ENCODE measurements at regions of chr7 and their contacts with region 1.

Region 1: DNA sequence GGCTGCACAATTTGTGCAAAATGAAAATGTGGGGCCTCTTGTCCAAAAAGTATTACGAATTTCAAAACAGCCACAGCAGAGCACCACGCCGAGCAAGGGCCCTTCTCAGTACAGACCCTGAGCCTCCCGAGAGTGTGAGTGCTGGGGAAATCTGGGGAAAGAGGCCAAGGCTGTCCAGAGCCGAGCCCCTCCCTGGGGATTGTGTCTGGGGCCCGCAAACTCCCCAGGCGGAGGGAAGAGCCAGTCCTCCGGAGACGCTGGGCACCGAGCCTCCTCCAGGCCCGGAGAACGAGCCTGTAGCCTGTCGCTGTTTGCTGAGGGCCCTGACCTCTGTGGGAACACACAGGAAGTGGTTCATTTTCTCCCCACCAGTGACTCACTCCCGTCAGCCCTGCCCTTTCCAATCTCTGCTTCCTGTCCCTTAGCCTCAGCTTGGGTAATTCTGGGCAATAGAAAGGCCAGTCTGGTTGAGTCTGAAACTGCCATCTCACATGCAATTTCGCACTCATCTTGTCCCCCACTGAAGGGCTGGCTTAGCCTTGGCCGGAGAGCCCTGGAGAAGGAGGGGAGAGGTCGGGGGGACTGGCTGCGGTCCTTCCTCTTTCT is 19.5 kb upstream of the GNA12 start:
- DNase-seq: peak; percentile 41 to 78 (median 59)
- ATAC-seq: peak; percentile 96
- H3K4me3 ChIP-seq: no peak overlapping the region
- H3K27ac ChIP-seq: no peak overlapping the region
- H3K4me1 ChIP-seq: peaks cover 0 to 15% of the 10 kb centered on the region in 2 experiments; a peak in 3 of 5 replicates
- H3K27me3 ChIP-seq: peaks cover 0 to 5% of the 10 kb centered on the region in 2 experiments; a peak in 1 of 5 replicates
- CTCF ChIP-seq: no peak
- EP300 ChIP-seq: peak; percentile 49; the same call in 1 of the 2 replicates
- POLR2A ChIP-seq: peak; percentile 62
- RAD21 ChIP-seq: 0 out of 4 replicates have a peak, but pooled peaks of 1 of the 2 experiments have one; percentile 17

Region 2: GRCh38 chr7:2621061-2621828 is 242.3 kb before region 1 on chr7:
- CTCF ChIA-PET with region 1: no interaction called
- POLR2A ChIA-PET with region 1: no interaction called
- in situ Hi-C with region 1: no loop called
- intact Hi-C with region 1: no loop called
- DNase-seq: peak in 3 of 4 experiments; percentile 26 to 42 (median 40)
- ATAC-seq: peak; percentile 33
- H3K4me3 ChIP-seq: no peak overlapping the region
- H3K27ac ChIP-seq: no peak overlapping the region
- H3K4me1 ChIP-seq: peaks cover 27 to 69% of the 10 kb centered on the region in 2 experiments; a peak in 4 of 5 replicates
- H3K27me3 ChIP-seq: peaks cover 0 to 8% of the 10 kb centered on the region in 2 experiments; a peak in 3 of 5 replicates
- CTCF ChIP-seq: no peak
- EP300 ChIP-seq: no peak
- POLR2A ChIP-seq: no peak
- RAD21 ChIP-seq: no peak

Region 3: GRCh38 chr7:3065724-3066143 is 202.2 kb after region 1 on chr7:
- CTCF ChIA-PET with region 1: no interaction called
- POLR2A ChIA-PET with region 1: interaction called, 3 read pairs
- in situ Hi-C with region 1: no loop called
- intact Hi-C with region 1: loop called (anchors 10 kb)
- DNase-seq: peak; percentile 70 to 86 (median 82)
- ATAC-seq: peak; percentile 99
- H3K4me3 ChIP-seq: no peak overlapping the region
- H3K27ac ChIP-seq: no peak overlapping the region
- H3K4me1 ChIP-seq: no peaks in the 10 kb centered on the region
- H3K27me3 ChIP-seq: peaks cover 0 to 31% of the 10 kb centered on the region in 2 experiments; a peak in 2 of 5 replicates
- CTCF ChIP-seq: peak; percentile 72 to 79 (median 76)
- EP300 ChIP-seq: 0 out of 2 replicates have a peak, but pooled peaks have one; percentile 11
- POLR2A ChIP-seq: no peak
- RAD21 ChIP-seq: peak in 1 of 2 experiments; percentile 56; a peak in 3 of 4 replicates

Region 4: GRCh38 chr7:3143869-3144775 is 280.6 kb after region 1 on chr7:
- CTCF ChIA-PET with region 1: no interaction called
- POLR2A ChIA-PET with region 1: no interaction called
- in situ Hi-C with region 1: no loop called
- intact Hi-C with region 1: no loop called
- DNase-seq: no peak
- ATAC-seq: no peak
- H3K4me3 ChIP-seq: no peak overlapping the region
- H3K27ac ChIP-seq: no peak overlapping the region
- H3K4me1 ChIP-seq: peaks cover 6 to 11% of the 10 kb centered on the region in 2 experiments; a peak in 4 of 5 replicates
- H3K27me3 ChIP-seq: peaks cover 1 to 31% of the 10 kb centered on the region in 2 experiments; a peak in 3 of 5 replicates
- CTCF ChIP-seq: no peak
- EP300 ChIP-seq: no peak
- POLR2A ChIP-seq: no peak
- RAD21 ChIP-seq: no peak

Region 5: DNA sequence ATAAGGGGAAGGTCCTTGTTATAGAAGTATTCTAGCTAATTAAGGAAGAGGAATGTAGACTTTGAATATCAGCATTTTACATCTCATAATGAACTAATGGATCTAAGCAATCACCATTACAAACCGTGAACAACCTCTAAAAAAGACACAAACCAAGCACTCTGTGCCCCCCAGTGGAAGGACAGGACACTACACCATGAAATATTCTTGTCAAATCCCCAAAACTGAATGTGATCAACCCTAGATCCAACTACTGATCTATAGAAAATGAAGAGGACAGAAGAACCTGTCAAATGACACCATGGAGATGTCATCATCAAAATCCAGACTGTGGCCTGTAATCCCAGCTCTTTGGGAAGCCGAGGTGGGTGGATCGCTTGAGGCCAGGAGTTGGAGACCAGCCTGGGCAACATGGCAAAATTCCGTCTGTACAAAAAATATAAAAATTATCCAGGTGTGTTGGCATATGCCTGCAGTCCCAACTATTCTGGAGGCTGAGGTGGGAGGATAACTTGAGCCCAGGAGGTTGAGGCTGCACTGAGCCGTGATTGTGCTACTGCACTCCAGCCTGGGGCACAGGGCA is 291.4 kb after region 1 on chr7:
- CTCF ChIA-PET with region 1: interaction called, 15 read pairs
- POLR2A ChIA-PET with region 1: no interaction called
- in situ Hi-C with region 1: loop called (anchors 5 kb)
- intact Hi-C with region 1: loop called (anchors 5 kb)
- DNase-seq: peak; percentile 43 to 63 (median 52)
- ATAC-seq: peak; percentile 69
- H3K4me3 ChIP-seq: no peak overlapping the region
- H3K27ac ChIP-seq: no peak overlapping the region
- H3K4me1 ChIP-seq: no peaks in the 10 kb centered on the region; a peak in 1 of 5 replicates
- H3K27me3 ChIP-seq: peaks cover 2 to 33% of the 10 kb centered on the region in 2 experiments; a peak in 4 of 5 replicates
- CTCF ChIP-seq: peak; percentile 60 to 82 (median 73); a peak in 5 of 6 replicates
- EP300 ChIP-seq: no peak
- POLR2A ChIP-seq: no peak
- RAD21 ChIP-seq: peak; percentile 73 to 90

Region 6: DNA sequence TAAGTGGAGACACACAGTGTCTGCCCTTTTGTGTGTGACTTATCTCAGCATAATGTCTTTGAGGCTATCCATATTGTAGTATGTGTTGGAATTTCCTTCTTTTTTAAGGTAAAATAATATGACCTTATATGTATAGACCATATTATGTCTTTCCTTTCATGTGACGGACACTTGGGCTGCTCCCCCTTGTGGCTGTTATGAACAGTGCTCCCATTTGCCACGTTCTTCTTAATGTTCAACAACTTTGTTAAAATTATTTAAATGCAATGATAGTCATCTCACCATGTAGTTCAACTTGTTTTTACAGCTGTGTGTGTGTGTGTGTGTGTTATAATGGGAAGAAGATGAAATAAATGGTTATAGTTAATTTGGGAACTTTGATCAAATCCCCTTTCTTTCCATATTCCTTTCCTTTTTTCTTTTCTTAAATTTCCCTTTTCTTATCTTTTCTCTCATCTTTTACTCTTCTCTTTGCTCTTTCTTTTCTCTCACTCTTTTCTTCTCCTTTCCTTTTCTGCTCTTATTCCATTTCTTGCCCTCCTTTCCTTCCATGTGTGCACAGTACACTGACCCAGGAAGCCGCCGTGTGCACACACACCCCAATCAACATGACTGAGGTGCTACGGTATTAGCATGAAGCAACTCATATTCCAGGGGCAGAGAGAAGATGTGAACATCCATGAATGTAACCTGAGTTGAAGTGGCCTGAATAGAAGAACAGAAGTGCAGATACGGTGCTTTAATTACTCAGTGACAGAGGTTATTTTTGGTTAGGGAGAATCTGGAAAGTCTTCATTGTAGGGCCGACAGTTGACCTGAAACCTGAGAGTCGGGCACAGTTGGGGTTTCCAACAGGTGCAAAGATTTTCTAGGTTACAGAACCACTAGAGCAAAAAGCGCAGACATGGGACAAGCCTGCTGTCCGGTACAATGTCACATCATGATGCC is 1034.1 kb after region 1 on chr7:
- CTCF ChIA-PET with region 1: interaction called, 7 read pairs
- POLR2A ChIA-PET with region 1: no interaction called
- in situ Hi-C with region 1: loop called (anchors 25 kb)
- intact Hi-C with region 1: no loop called
- DNase-seq: peak; percentile 27 to 57 (median 46)
- ATAC-seq: peak; percentile 62
- H3K4me3 ChIP-seq: no peak overlapping the region
- H3K27ac ChIP-seq: no peak overlapping the region
- H3K4me1 ChIP-seq: no peaks in the 10 kb centered on the region
- H3K27me3 ChIP-seq: peaks cover 8 to 14% of the 10 kb centered on the region in 2 experiments; a peak in 4 of 5 replicates
- CTCF ChIP-seq: peak; percentile 56 to 74 (median 72); a peak in 5 of 6 replicates
- EP300 ChIP-seq: no peak
- POLR2A ChIP-seq: no peak
- RAD21 ChIP-seq: peak; percentile 48 to 56